Ascending aorta (tissue), 2 donors: ENCODE measurements at regions of chr1 and their contacts with region 1.

Region 1: DNA sequence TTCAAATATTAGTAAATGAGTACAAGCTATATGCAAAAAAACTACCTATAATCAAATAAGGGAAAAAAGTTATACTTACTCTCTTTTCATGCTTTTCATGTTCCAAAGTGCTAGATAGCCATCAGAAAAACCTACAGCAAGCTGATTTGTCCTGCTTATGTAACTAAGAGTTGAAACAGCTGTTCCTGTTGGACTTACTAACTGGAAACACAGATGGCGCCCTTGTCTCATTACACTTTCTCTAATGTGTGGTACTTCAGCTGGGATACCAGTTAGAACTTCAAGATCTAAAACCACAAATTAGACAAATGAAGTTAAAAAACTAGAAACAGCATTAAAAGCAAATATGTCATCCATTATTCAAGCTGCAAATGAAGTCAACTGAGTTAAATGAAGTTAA is 24.3 kb downstream of the AHCTF1 start:
- DNase-seq: no peak
- H3K4me3 ChIP-seq: no peak overlapping the region
- H3K27ac ChIP-seq: no peak overlapping the region
- H3K4me1 ChIP-seq: no peaks in the 10 kb centered on the region
- H3K27me3 ChIP-seq: no peaks in the 10 kb centered on the region
- CTCF ChIP-seq: peak; percentile 30 to 58 (median 39)

Region 2: DNA sequence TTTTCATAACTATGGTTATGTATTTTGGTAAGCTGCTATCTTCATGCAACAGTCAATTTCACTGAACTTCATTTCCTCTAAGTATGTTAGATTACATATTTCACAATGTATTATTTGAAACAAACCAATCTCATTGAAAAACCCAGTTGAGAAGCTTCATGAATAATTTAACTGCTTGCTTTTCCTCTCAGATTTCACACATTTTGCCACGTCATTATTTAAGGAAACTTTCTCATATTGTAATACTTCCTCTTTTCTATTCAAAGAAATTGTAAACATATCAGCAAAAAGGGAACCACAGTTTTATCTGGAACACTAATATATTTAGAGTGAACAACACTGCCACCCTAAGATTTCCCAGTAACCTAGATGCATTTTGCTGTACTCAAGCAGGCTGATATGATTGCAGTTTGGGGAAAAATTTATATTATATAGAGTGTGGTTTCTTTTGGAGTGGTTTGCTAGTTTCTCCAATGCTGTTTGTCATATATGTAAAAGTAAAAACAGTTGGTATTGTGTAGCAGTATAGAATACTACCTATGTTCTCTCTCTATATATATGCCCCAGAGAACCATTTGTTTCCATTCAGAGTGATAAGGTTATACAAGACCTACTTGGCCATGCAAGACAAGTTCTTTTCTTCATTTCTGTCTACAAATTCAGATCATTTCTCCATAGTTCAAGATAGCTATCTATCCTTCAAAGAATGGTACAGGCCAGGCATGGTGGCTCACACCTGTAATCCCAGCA is 52.6 kb after region 1 on chr1:
- intact Hi-C with region 1: loop called (anchors 1 kb)
- DNase-seq: no peak
- H3K4me3 ChIP-seq: no peak overlapping the region
- H3K27ac ChIP-seq: peak overlapping the region in 1 of 2 donors; percentile 2
- H3K4me1 ChIP-seq: no peaks in the 10 kb centered on the region
- H3K27me3 ChIP-seq: no peaks in the 10 kb centered on the region
- CTCF ChIP-seq: peak in 2 of 3 experiments; percentile 15 to 48

Region 3: DNA sequence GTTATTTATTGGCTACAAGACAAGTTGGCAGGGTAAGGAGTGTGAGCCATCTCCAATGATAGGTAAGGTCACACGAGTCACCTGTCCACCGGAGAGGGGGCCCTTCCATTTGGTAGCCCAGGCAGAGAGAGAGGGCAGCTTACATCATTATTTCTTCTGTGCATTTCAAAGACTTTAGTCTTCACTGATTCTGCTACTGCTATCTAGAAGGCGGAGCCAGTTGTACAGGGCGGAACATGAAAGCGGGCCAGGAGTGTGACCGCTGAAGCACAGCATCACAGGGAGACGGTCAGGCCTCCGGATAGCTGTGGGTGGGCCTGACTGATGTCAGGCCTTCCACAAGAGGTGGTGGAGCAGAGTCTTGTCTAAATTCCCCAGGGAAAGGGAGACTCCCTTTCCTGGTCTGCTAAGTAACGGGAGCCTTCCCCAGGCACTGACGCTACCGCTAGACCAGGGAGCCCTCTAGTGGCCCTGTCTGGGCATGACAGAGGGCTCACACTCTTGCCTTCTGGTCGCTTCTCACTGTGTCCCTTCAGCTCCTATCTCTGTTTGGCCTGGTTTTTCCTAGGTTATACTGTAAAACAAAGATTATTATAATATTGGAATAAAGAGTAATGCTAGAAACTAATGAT is 63.7 kb after region 1 on chr1:
- intact Hi-C with region 1: loop called (anchors 2 kb)
- DNase-seq: peak in 1 of 2 donors; percentile 75
- H3K4me3 ChIP-seq: no peak overlapping the region
- H3K27ac ChIP-seq: no peak overlapping the region
- H3K4me1 ChIP-seq: no peaks in the 10 kb centered on the region
- H3K27me3 ChIP-seq: no peaks in the 10 kb centered on the region
- CTCF ChIP-seq: peak; percentile 71 to 90 (median 88)

Region 4: DNA sequence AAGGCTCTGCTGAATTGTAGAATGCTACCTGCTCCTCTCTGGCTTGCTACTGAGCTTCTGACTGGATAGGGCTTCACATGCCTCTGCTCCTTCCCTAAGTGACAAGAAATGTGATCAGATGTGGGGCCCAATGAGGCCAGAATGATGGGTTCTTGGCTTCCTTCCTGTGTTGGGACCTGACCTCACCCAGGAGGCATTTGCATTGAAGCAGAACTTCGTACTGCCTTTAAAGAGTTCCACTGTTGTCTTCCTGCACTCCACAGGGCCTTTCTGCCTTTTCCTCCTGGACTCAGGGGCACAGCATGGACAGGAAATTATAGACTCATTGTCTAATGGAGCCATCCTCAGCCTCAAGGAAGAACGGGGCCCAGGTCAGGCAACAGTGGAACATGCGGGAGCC is 156.8 kb after region 1 on chr1:
- intact Hi-C with region 1: no loop called
- DNase-seq: no peak
- H3K4me3 ChIP-seq: no peak overlapping the region
- H3K27ac ChIP-seq: no peak overlapping the region
- H3K4me1 ChIP-seq: no peaks in the 10 kb centered on the region
- H3K27me3 ChIP-seq: no peaks in the 10 kb centered on the region
- CTCF ChIP-seq: no peak